ENCODE measurements at regions of chr15 and their contacts with region 1.

Region 1: DNA sequence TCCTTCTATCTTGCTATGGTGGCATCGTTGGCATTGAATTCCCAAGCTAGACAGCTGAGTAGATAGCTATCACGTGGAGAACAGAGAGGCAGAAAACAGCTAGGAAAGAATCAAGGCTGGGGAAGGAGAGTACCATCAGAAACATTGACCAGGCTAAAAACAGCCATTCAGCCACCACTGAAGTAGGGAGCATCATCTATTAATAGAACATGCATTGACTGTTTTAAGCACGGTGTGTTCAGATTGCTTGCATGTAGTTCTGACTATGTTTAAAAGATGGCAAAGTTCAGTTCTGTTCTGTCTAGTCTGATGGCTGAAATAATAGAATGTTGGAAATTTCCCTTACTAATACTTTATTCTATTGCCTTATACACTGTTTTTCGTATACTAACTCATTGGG is 413.0 kb downstream of the GABRB3 start:
- DNase-seq: no peak
- H3K4me3 ChIP-seq: no peak overlapping the region
- H3K27ac ChIP-seq: no peak overlapping the region
- H3K4me1 ChIP-seq: no peaks in the 10 kb centered on the region
- H3K27me3 ChIP-seq: no peaks in the 10 kb centered on the region
- CTCF ChIP-seq: no peak

Region 2: DNA sequence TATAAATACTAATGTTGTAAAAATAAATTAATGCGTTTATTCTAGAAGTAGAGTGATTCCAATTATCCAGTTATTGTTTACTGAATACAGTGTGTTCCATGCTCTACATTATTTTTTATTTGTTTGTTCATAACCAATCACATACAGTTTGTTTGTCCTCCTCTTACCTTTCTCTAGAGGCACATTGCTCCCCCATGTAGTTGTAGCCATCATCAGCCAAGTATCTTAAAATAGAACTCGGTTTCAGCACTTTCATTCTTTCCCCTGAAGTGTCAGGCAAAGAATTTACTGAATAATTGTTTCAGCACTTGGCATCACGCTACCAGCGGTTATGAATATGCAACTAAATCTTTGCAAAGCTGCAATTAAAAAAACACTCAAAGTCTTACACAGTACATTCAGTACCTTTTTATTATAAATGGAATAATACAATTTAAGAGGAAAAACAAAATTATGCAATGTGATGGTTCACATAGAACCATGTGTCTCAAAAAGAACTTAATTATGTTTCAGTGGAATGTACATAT is 48.1 kb before region 1 on chr15:
- CTCF ChIA-PET with region 1: no interaction called
- POLR2A ChIA-PET with region 1: no interaction called
- intact Hi-C with region 1: loop called (anchors 10 kb)
- DNase-seq: no peak
- H3K4me3 ChIP-seq: no peak overlapping the region
- H3K27ac ChIP-seq: no peak overlapping the region
- H3K4me1 ChIP-seq: no peaks in the 10 kb centered on the region
- H3K27me3 ChIP-seq: no peaks in the 10 kb centered on the region
- CTCF ChIP-seq: no peak

Measured in A673 (cell line).